Lower lobe of right lung (tissue), 2 donors: ENCODE measurements at regions of chr7 and their contacts with region 1.

Region 1: GRCh38 chr7:39465055-39465929 is 100.9 kb upstream of the YAE1 start:
- DNase-seq: no peak
- ATAC-seq: peak; percentile 78 to 87
- H3K4me3 ChIP-seq: no peak overlapping the region
- H3K27ac ChIP-seq: no peak overlapping the region
- H3K4me1 ChIP-seq: no peaks in the 10 kb centered on the region
- H3K27me3 ChIP-seq: no peaks in the 10 kb centered on the region
- CTCF ChIP-seq: peak; percentile 72

Region 2: GRCh38 chr7:38932509-38933168 is 532.7 kb before region 1 on chr7:
- intact Hi-C with region 1: loop called (anchors 5 kb)
- DNase-seq: peak; percentile 67
- ATAC-seq: peak; percentile 31 to 46
- H3K4me3 ChIP-seq: no peak overlapping the region
- H3K27ac ChIP-seq: no peak overlapping the region
- H3K4me1 ChIP-seq: peaks cover 6% of the 10 kb centered on the region
- H3K27me3 ChIP-seq: no peaks in the 10 kb centered on the region
- CTCF ChIP-seq: peak; percentile 85

Region 3: GRCh38 chr7:39105720-39106119 is 359.6 kb before region 1 on chr7:
- intact Hi-C with region 1: no loop called
- DNase-seq: no peak
- ATAC-seq: no peak
- H3K4me3 ChIP-seq: no peak overlapping the region
- H3K27ac ChIP-seq: no peak overlapping the region
- H3K4me1 ChIP-seq: no peaks in the 10 kb centered on the region
- H3K27me3 ChIP-seq: no peaks in the 10 kb centered on the region
- CTCF ChIP-seq: no peak

Region 4: GRCh38 chr7:39623018-39623731 is 157.9 kb after region 1 on chr7 and contains the start of gene RALA:
- intact Hi-C with region 1: no loop called
- DNase-seq: peak; percentile 93
- ATAC-seq: peak; percentile 99
- H3K4me3 ChIP-seq: peak within 1 kb of the TSS; percentile 86
- H3K27ac ChIP-seq: peak within 1 kb of the TSS; percentile 93
- H3K4me1 ChIP-seq: peaks cover 44% of the 10 kb centered on the region
- H3K27me3 ChIP-seq: no peaks in the 10 kb centered on the region
- CTCF ChIP-seq: no peak
- total RNA-seq, gene RALA: 48.0 TPM